ENCODE measurements at regions of chr2 and their contacts with region 1.

Region 1: DNA sequence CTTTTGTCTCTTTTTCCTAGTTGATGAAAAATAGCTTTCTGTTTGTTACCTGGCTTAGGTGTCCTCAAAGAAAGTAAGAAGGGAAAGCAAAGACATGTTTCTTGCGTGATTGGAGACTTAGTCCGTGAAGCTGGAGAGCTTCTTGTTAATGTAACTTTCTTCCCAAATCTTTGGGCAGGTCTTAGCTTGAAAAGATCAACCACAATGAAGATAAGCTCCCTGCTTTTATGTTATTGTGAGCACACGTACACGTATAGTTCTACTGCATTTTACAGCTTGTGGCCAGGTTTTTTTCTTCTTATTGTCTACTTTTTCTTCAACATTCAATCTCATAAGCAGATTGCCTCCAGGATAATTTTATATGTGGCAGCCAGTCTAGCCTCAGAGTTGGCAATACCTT is 99.8 kb downstream of the DIS3L2 start:
- DNase-seq: peak; percentile 70
- H3K4me3 ChIP-seq: peak overlapping the region; percentile 4 to 25 (median 24)
- H3K27ac ChIP-seq: no peak overlapping the region
- H3K4me1 ChIP-seq: peaks cover 10% of the 10 kb centered on the region
- H3K27me3 ChIP-seq: no peaks in the 10 kb centered on the region
- CTCF ChIP-seq: no peak

Region 2: GRCh38 chr2:232211743-232212686 is 150.8 kb after region 1 on chr2:
- CTCF ChIA-PET with region 1: no interaction called
- dilution Hi-C with region 1: no loop called
- in situ Hi-C with region 1: no loop called
- intact Hi-C with region 1: loop called (anchors 10 kb)
- DNase-seq: peak; percentile 14
- H3K4me3 ChIP-seq: no peak overlapping the region
- H3K27ac ChIP-seq: no peak overlapping the region
- H3K4me1 ChIP-seq: peaks cover 17% of the 10 kb centered on the region
- H3K27me3 ChIP-seq: no peaks in the 10 kb centered on the region
- CTCF ChIP-seq: no peak